Mammary epithelial cell (primary cell): ENCODE measurements at regions of chr12 and their contacts with region 1.

Region 1: GRCh38 chr12:96985480-96986362 is 78.7 kb downstream of the NEDD1 start:
- DNase-seq: no peak
- H3K4me3 ChIP-seq: peak overlapping the region; percentile 9 to 23 (median 12)
- H3K27ac ChIP-seq: no peak overlapping the region
- H3K4me1 ChIP-seq: peaks cover 3% of the 10 kb centered on the region
- H3K27me3 ChIP-seq: peaks cover 5% of the 10 kb centered on the region
- CTCF ChIP-seq: peak; percentile 70 to 76

Region 2: GRCh38 chr12:96635834-96636233 is 349.9 kb before region 1 on chr12:
- CTCF ChIA-PET with region 1: no interaction called
- dilution Hi-C with region 1: no loop called
- in situ Hi-C with region 1: no loop called
- intact Hi-C with region 1: no loop called
- DNase-seq: peak; percentile 45
- H3K4me3 ChIP-seq: no peak overlapping the region
- H3K27ac ChIP-seq: no peak overlapping the region
- H3K4me1 ChIP-seq: no peaks in the 10 kb centered on the region
- H3K27me3 ChIP-seq: no peaks in the 10 kb centered on the region
- CTCF ChIP-seq: no peak

Region 3: DNA sequence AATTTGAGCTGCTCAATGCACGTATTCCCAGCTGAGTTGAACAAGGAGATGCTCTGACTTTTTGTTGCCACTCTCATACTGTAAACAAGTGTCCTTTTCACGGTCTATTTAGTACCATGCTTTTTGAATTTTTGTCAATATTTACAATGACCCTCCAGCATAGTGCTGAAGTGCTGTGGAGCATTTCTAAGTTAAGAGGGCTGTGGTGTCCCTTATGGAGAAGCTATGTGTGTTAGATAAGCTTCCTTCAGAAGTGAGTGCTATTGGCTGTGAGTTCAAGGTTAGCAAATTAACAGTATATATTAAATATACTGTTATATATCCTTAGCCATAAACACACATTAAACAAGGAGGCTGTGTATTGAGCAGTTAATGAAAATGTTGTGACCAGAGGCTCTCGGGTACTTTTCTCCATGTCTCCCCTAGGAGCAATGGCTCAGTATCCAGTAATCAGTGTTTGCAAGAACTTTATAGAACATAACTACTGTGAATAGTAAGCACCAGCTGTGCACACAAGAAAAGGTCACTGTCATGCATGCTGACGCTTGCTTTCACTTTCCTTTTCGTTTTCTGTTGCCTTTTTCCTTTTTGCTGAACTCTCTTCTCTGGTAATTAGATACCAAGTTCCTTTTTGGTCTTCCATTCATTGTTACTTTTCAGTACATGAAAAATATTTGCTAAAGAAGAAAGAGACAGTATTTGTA is 265.9 kb before region 1 on chr12:
- CTCF ChIA-PET with region 1: no interaction called
- dilution Hi-C with region 1: no loop called
- in situ Hi-C with region 1: no loop called
- intact Hi-C with region 1: loop called (anchors 10 kb)
- DNase-seq: peak; percentile 12
- H3K4me3 ChIP-seq: peak overlapping the region; percentile 16 to 46 (median 26)
- H3K27ac ChIP-seq: no peak overlapping the region
- H3K4me1 ChIP-seq: no peaks in the 10 kb centered on the region
- H3K27me3 ChIP-seq: no peaks in the 10 kb centered on the region
- CTCF ChIP-seq: no peak

Region 4: GRCh38 chr12:96948782-96949181 is 36.9 kb before region 1 on chr12:
- CTCF ChIA-PET with region 1: no interaction called
- dilution Hi-C with region 1: no loop called
- in situ Hi-C with region 1: no loop called
- intact Hi-C with region 1: no loop called
- DNase-seq: no peak
- H3K4me3 ChIP-seq: no peak overlapping the region
- H3K27ac ChIP-seq: no peak overlapping the region
- H3K4me1 ChIP-seq: no peaks in the 10 kb centered on the region
- H3K27me3 ChIP-seq: no peaks in the 10 kb centered on the region
- CTCF ChIP-seq: no peak

Region 5: GRCh38 chr12:97404543-97404942 is 418.8 kb after region 1 on chr12:
- CTCF ChIA-PET with region 1: no interaction called
- dilution Hi-C with region 1: no loop called
- in situ Hi-C with region 1: no loop called
- intact Hi-C with region 1: loop called (anchors 1 kb)
- DNase-seq: peak; percentile 14
- H3K4me3 ChIP-seq: no peak overlapping the region
- H3K27ac ChIP-seq: no peak overlapping the region
- H3K4me1 ChIP-seq: no peaks in the 10 kb centered on the region
- H3K27me3 ChIP-seq: no peaks in the 10 kb centered on the region
- CTCF ChIP-seq: peak; percentile 80 to 88

Region 6: DNA sequence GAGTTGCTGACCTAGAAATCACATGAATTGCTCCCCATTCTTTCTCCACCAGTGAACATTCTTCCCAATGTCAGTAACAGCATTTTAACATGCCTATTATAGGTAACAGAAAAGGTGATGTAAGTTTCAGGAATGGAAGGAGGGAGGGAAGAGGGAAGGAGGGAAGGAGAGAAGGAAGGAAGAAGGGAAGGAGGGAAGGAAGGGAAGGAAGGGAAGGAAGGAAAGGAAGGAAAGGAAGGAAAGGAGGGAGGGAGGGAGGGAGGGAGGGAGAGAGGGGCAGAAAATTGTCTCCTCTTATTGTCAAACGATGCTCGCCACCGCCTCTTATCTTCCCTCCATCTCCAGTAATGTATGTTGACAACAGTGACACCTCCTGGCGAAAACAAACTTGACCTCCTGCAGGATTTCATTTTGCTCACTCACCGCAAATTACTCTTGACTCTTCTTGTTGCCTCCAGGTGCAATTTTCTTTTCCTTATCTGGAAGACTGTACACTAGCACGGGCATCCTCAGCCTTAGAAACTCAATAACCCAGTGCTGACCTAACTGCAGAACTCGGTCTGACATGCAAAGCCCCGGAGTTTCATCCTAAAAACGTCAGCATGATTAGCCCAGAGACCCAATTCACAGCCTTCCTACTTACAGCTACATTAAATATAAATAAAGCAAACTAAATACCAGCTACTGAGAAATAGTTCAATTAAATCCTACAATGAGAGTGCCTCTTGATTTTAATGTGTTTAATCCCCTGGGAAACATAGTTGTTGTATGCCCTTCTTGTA is 1017.2 kb after region 1 on chr12:
- CTCF ChIA-PET with region 1: interaction called, 4 read pairs
- dilution Hi-C with region 1: no loop called
- in situ Hi-C with region 1: loop called in 1 of 2 experiments (anchors 25 kb)
- intact Hi-C with region 1: loop called (anchors 5 kb)
- DNase-seq: peak; percentile 48
- H3K4me3 ChIP-seq: no peak overlapping the region
- H3K27ac ChIP-seq: no peak overlapping the region
- H3K4me1 ChIP-seq: no peaks in the 10 kb centered on the region
- H3K27me3 ChIP-seq: no peaks in the 10 kb centered on the region
- CTCF ChIP-seq: peak; percentile 59 to 66

Region 7: DNA sequence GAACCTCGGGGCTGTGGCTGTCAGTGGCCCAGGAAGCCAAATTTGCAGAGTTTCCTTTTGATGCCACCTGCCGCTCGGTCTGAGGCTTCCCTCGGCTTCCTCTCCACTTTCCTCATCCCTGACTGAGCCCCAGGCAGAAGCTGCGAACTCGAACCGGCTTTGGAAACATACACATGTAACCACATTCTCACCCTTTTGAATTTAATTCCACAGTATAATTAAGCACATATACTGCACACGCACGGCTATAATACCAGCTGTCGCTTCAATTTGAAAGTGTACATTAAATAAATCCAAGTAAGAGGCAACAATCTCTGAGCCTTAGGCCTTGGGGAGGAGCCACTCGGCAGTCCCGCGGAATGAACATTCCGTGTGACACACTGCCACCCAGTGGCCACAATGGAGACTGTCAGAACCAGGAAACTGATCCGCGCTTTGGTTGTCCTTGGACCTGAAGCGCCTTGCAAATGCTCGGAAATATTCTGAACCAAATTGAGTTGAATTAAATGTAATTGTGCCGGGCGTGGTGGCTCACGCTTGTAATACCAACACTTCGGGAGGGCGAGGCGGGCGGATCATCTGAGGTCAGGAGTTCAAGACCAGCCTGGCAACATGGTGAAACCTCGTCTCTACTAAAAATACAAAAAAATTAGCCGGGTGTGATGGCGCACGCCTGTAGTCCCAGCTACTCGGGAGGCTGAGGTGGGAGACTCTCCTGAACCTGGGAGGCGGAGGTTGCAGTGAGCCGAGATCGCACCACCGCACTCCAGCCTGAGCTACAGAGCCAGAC is 1411.8 kb after region 1 on chr12:
- CTCF ChIA-PET with region 1: no interaction called
- dilution Hi-C with region 1: no loop called
- in situ Hi-C with region 1: loop called (anchors 25 kb)
- intact Hi-C with region 1: loop called (anchors 1 kb)
- DNase-seq: peak; percentile 64
- H3K4me3 ChIP-seq: peak overlapping the region; percentile 36 to 45 (median 39)
- H3K27ac ChIP-seq: no peak overlapping the region
- H3K4me1 ChIP-seq: peaks cover 17% of the 10 kb centered on the region
- H3K27me3 ChIP-seq: no peaks in the 10 kb centered on the region
- CTCF ChIP-seq: peak; percentile 80 to 81